ENCODE measurements at regions of chr17 and their contacts with region 1.

Region 1: GRCh38 chr17:82489117-82489516 is 30.4 kb upstream of the FOXK2 start:
- DNase-seq: peak; percentile 92 to 93
- ATAC-seq: peak; percentile 92
- H3K4me3 ChIP-seq: no peak overlapping the region
- H3K27ac ChIP-seq: peak overlapping the region in 1 of 2 donors; percentile 99
- H3K4me1 ChIP-seq: no peaks in the 10 kb centered on the region
- H3K27me3 ChIP-seq: no peaks in the 10 kb centered on the region

Region 2: GRCh38 chr17:82457997-82458864 is 30.9 kb before region 1 on chr17 and contains the start of gene NARF:
- intact Hi-C with region 1: loop called in 1 of 2 experiments (anchors 2 kb)
- DNase-seq: peak; percentile 98
- ATAC-seq: peak; percentile 100
- H3K4me3 ChIP-seq: peak within 1 kb of the TSS; percentile 85 to 94
- H3K27ac ChIP-seq: peak within 1 kb of the TSS; percentile 98 to 100
- H3K4me1 ChIP-seq: peaks cover 0 to 2% of the 10 kb centered on the region in 2 donors
- H3K27me3 ChIP-seq: no peaks in the 10 kb centered on the region
- total RNA-seq, gene NARF: 45.9 to 76.0 TPM